AG04450 (cell line): ENCODE measurements at regions of chr17 and their contacts with region 1.

Region 1: DNA sequence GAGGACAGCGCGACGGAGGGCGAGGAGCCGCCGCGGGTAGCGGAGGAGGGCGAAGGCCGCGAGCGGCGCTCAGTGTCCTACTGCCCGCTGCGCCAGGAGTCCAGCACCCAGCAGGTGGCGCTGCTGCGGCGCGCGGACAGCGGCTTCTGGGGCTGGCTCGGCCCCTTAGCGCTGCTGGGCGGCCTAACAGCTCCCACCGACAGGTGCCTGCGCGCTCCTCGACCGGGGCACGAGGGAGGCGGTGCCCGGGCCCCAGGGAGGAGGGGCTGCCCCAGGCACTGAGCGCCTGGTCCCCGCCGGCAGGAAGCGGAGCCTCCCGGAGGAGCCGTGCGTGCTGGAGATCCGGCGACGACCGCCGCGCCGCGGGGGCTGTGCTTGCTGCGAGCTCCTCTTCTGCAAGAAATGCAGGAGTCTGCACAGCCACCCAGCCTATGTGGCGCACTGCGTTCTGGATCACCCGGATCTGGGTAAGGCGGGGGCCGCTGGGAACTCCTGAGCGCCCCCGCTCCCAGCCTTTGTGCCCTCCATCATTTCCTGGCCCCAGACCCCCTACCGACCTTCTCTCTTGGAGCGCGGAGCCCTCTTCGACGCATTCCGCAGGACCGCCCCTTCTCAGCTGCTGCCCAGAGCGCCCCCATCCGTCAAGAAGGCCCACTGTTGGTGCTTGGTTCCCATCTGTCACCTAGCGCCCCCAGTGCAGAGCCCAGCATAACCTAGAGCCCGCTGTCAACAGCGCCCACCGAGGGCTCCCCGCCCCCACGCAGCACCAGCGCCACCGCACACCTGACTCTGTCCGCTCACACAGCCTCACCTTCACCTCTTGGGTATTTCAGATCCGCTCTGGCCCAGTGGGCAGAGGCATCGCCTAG is 3.7 kb downstream of the C17orf50 start:
- DNase-seq: no peak
- H3K4me3 ChIP-seq: peak overlapping the region; percentile 49
- H3K27ac ChIP-seq: no peak overlapping the region
- H3K27me3 ChIP-seq: peaks cover 34% of the 10 kb centered on the region
- CTCF ChIP-seq: peak; percentile 85

Region 2: GRCh38 chr17:35612924-35613521 is 151.3 kb before region 1 on chr17:
- CTCF ChIA-PET with region 1: interaction called, 18 read pairs
- POLR2A ChIA-PET with region 1: no interaction called
- DNase-seq: no peak
- H3K4me3 ChIP-seq: no peak overlapping the region
- H3K27ac ChIP-seq: no peak overlapping the region
- H3K27me3 ChIP-seq: no peaks in the 10 kb centered on the region
- CTCF ChIP-seq: peak; percentile 71

Region 3: DNA sequence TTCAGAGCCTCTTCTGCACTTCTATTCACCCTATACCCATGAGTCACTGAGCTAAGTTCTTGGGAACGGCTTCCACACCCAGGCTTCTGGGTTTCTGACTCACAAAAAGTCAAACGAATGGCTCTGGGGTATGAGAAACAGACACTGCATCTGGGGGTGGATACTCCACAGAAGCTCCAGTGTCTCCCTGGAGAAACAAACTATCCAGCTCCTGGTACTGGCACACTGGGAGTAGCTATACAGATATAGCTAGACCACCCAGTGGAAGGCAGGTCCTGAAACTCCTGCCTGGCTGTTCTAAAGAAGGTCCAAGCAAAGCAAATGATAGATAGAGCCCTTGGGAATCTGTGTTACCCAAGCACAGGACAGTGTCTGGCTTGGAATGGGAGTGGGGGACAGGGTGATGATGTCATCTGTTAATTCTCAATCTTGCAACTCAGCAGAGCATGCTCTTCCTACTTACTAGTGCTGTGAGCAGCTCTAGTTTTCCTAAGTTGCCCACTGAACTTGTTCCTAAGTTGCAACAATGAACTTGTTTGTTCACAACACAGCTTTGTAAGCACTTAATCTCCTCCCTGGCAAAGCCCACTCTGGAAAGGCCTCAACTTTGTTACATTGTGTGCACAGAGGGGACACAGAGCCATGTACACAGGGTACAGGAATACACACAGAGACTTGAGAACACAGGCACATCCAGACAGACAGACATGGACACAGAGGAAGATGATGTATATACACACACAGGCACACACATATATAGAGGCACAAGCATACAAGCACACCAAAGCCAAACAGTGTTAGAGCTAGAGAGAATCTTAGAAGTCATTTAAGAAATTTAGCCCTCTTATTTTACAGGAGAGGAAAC is 24.4 kb after region 1 on chr17:
- CTCF ChIA-PET with region 1: interaction called, 18 read pairs
- POLR2A ChIA-PET with region 1: interaction called, 3 read pairs
- DNase-seq: no peak
- H3K4me3 ChIP-seq: no peak overlapping the region
- H3K27ac ChIP-seq: peak overlapping the region; percentile 73
- H3K27me3 ChIP-seq: peaks cover 12% of the 10 kb centered on the region
- CTCF ChIP-seq: no peak

Region 4: DNA sequence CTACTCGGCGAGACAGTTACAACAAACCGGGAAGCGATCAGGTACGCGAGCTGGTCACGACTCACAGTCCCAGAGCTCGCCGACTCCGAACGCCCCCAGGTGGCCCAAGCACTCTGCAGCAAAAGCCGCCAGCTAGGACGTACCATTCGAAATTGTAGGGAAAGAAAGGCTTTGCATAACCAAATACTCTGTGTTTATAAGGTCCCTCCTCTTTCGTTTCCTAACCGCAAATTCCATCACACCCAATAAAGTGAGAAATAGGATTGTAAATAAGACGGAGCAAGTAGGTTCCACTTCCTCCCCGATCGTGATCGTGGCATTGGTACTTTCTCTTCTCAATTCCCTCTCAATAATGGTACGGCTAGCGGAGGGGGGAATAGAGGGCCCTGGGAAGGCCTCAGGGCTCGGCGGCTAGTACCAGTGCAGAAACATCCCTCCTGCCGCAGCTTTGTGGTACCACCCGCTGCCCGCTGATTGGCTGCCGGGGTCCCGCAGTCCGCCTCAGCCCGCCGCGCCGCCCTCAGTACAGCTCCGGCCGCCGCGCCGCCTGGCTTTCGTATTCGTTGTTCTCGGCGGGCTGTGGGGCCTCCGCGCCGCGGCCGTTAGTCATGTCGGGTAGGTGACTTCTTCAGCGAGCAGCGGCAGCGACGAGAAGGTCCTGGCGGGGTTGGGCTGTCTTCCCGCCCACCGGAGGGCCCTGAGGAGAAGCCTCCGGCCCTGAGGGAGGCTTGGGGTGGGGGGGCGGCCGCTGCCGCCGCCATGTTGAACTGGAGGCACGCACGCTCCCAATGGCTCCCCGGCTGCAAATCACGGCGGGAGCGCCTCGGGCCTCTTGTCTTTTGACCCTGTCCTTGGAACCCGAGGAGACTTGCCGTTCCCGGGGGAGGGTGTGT is 44.9 kb after region 1 on chr17 and contains the start of gene TAF15:
- CTCF ChIA-PET with region 1: interaction called, 478 read pairs
- POLR2A ChIA-PET with region 1: interaction called, 24 read pairs
- DNase-seq: peak; percentile 96
- H3K4me3 ChIP-seq: peak within 1 kb of the TSS; percentile 99
- H3K27ac ChIP-seq: peak within 1 kb of the TSS; percentile 91
- H3K27me3 ChIP-seq: no peaks in the 10 kb centered on the region
- CTCF ChIP-seq: peak; percentile 78
- polyA plus RNA-seq, gene TAF15: 51.6 and 66.1 TPM in 2 replicates

Region 5: GRCh38 chr17:35825206-35825605 is 60.8 kb after region 1 on chr17:
- CTCF ChIA-PET with region 1: interaction called, 15 read pairs
- POLR2A ChIA-PET with region 1: no interaction called
- DNase-seq: no peak
- H3K4me3 ChIP-seq: no peak overlapping the region
- H3K27ac ChIP-seq: no peak overlapping the region
- H3K27me3 ChIP-seq: no peaks in the 10 kb centered on the region
- CTCF ChIP-seq: no peak

Region 6: GRCh38 chr17:36008998-36009665 is 244.8 kb after region 1 on chr17:
- CTCF ChIA-PET with region 1: no interaction called
- POLR2A ChIA-PET with region 1: no interaction called
- DNase-seq: peak; percentile 4
- H3K4me3 ChIP-seq: no peak overlapping the region
- H3K27ac ChIP-seq: no peak overlapping the region
- H3K27me3 ChIP-seq: peaks cover 2% of the 10 kb centered on the region
- CTCF ChIP-seq: peak; percentile 62